ENCODE measurements at regions of chr11 and their contacts with region 1.

Region 1: GRCh38 chr11:128831174-128832120 is 35.6 kb downstream of the KCNJ1 start:
- DNase-seq: peak; percentile 84
- ATAC-seq: peak; percentile 92
- H3K4me3 ChIP-seq: no peak overlapping the region
- H3K27ac ChIP-seq: no peak overlapping the region
- H3K4me1 ChIP-seq: no peaks in the 10 kb centered on the region
- H3K27me3 ChIP-seq: peaks cover 9% of the 10 kb centered on the region
- CTCF ChIP-seq: peak; percentile 84
- POLR2A ChIP-seq: 0 out of 2 replicates have a peak, but pooled peaks have one; percentile 36
- RAD21 ChIP-seq: peak; percentile 96

Region 2: GRCh38 chr11:128157423-128158298 is 673.8 kb before region 1 on chr11:
- CTCF ChIA-PET with region 1: interaction called, 6 read pairs
- POLR2A ChIA-PET with region 1: no interaction called
- dilution Hi-C with region 1: no loop called
- in situ Hi-C with region 1: no loop called
- intact Hi-C with region 1: loop called (anchors 1 kb)
- DNase-seq: peak; percentile 78
- ATAC-seq: peak; percentile 94
- H3K4me3 ChIP-seq: peak overlapping the region; percentile 41; the same call in 1 of the 2 replicates
- H3K27ac ChIP-seq: no peak overlapping the region
- H3K4me1 ChIP-seq: no peaks in the 10 kb centered on the region
- H3K27me3 ChIP-seq: peaks cover 31% of the 10 kb centered on the region
- CTCF ChIP-seq: peak; percentile 67
- POLR2A ChIP-seq: no peak
- RAD21 ChIP-seq: peak; percentile 72

Region 3: DNA sequence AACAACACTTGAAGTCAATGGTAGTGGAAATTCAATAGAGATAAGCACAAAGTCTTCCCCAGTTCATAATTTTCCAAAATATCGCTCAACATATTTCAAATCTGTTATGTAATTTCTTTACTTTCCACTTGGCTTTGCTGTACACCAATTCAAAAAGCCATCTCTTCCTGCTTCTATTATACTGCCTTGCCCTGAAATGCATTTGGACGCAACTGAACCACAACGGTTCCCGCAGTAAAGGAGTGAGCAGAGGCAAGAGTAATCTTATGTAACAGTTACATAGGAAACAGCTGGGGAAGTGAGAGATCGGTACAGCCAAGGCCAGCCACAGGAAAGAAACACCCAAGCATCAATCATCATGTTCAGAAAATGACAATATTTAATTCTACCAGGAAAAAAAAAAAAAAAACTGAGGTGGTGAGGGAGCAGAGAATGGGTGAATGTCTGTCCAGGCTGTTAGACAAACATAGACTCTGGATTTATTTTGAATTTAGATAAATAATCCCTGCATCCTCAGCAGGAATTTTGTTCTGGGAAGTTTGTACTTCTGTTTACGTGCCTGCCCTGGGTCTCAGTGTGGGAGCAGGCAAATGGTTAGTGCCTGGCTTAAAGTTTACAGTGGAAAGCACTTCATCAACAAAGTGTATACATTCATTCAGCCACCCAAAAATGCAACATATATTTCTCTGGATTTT is 636.2 kb before region 1 on chr11:
- CTCF ChIA-PET with region 1: no interaction called
- POLR2A ChIA-PET with region 1: no interaction called
- dilution Hi-C with region 1: loop called (anchors 25 kb)
- in situ Hi-C with region 1: no loop called
- intact Hi-C with region 1: no loop called
- DNase-seq: no peak
- ATAC-seq: no peak
- H3K4me3 ChIP-seq: no peak overlapping the region
- H3K27ac ChIP-seq: no peak overlapping the region
- H3K4me1 ChIP-seq: no peaks in the 10 kb centered on the region; the same call in 1 of the 2 replicates
- H3K27me3 ChIP-seq: no peaks in the 10 kb centered on the region
- CTCF ChIP-seq: no peak
- POLR2A ChIP-seq: no peak
- RAD21 ChIP-seq: no peak

Region 4: GRCh38 chr11:128290106-128290840 is 541.2 kb before region 1 on chr11:
- CTCF ChIA-PET with region 1: interaction called, 3 read pairs
- POLR2A ChIA-PET with region 1: no interaction called
- dilution Hi-C with region 1: no loop called
- in situ Hi-C with region 1: loop called (anchors 10 kb)
- intact Hi-C with region 1: loop called (anchors 1 kb)
- DNase-seq: peak; percentile 95
- ATAC-seq: peak; percentile 95
- H3K4me3 ChIP-seq: no peak overlapping the region
- H3K27ac ChIP-seq: no peak overlapping the region
- H3K4me1 ChIP-seq: peaks cover 14% of the 10 kb centered on the region
- H3K27me3 ChIP-seq: peaks cover 1% of the 10 kb centered on the region; the same call in 1 of the 2 replicates
- CTCF ChIP-seq: peak; percentile 89
- POLR2A ChIP-seq: peak; percentile 46; the same call in 1 of the 2 replicates
- RAD21 ChIP-seq: peak; percentile 99

Region 5: DNA sequence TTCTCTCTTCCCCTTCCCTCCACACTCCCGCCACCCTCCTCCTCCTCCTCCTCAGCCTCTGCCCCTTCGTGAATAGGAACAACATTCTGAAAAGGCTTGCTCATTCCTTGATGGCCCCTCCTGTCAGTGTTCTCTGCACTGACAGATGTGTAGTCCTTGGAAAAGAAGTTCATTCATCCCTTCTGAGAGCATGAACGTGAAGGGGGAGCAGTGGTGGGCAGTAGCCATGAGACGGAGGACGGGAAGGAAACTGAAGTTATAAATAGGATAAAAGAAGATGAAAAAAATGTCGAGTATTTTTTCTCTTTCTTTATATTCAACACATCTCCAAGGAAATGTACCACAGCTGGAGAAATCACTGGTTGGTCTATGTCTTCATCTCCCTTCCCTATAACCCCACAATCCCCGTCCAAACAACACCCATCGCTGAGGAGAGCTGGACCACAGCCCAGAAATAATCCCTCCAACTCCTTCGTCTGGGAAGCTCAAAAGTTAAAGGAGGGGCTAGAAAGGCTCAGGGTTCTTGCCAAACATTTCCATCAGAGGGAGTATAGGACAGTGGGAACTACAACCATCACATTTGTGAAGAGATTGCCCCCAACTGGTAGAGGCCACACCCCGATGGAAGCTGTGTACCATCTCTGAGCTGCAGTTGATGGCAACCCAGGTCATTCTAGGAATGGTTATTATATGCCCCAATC is 277.6 kb before region 1 on chr11:
- CTCF ChIA-PET with region 1: no interaction called
- POLR2A ChIA-PET with region 1: no interaction called
- dilution Hi-C with region 1: no loop called
- in situ Hi-C with region 1: no loop called
- intact Hi-C with region 1: loop called (anchors 1 kb)
- DNase-seq: peak; percentile 32
- ATAC-seq: 0 out of 2 replicates have a peak, but pooled peaks have one; percentile 25
- H3K4me3 ChIP-seq: no peak overlapping the region
- H3K27ac ChIP-seq: no peak overlapping the region
- H3K4me1 ChIP-seq: peaks cover 5% of the 10 kb centered on the region; the same call in 1 of the 2 replicates
- H3K27me3 ChIP-seq: peaks cover 2% of the 10 kb centered on the region; the same call in 1 of the 2 replicates
- CTCF ChIP-seq: no peak
- POLR2A ChIP-seq: no peak
- RAD21 ChIP-seq: no peak

Region 6: GRCh38 chr11:128692753-128693415 is 138.6 kb before region 1 on chr11:
- CTCF ChIA-PET with region 1: interaction called, 3 read pairs
- POLR2A ChIA-PET with region 1: no interaction called
- dilution Hi-C with region 1: no loop called
- in situ Hi-C with region 1: no loop called
- intact Hi-C with region 1: loop called (anchors 2 kb)
- DNase-seq: no peak
- ATAC-seq: peak; percentile 48
- H3K4me3 ChIP-seq: peak overlapping the region; percentile 88
- H3K27ac ChIP-seq: peak overlapping the region; percentile 59
- H3K4me1 ChIP-seq: peaks cover 10% of the 10 kb centered on the region
- H3K27me3 ChIP-seq: peaks cover 35% of the 10 kb centered on the region
- CTCF ChIP-seq: no peak
- POLR2A ChIP-seq: peak; percentile 45; the same call in 1 of the 2 replicates
- RAD21 ChIP-seq: no peak